ENCODE measurements at regions of chr20 and their contacts with region 1.

Region 1: DNA sequence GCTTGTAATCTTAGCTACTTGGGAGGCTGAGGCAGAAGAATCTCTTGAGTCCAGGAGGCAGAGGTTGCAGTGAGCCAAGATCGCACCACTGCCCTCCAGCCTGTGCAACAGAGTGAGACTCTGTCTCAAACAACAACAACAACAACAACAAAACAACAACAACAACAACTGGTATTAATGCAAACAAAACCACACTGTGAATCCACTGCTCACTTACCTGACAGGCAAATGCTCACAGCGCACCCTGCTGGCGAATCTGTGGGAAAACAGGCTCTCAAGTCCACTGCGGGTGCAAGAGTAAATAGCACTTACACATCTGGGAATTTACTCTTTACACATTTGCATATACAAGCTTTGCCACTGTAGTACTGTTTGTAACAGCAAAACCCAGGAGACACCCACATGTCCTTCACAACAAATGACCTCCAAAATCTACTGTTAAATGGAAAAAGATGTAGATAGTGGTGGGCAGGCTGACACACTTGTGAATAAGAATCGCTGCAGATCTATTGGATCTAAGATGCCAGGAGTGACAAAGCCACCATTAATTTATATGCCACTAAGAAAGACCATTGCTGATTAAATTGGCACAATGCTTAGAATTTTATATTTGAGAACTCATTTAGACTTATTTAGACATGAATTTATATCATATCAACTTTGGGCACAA is 29.3 kb downstream of the NSFL1C start:
- DNase-seq: peak; percentile 38
- H3K4me3 ChIP-seq: no peak overlapping the region
- CTCF ChIP-seq: peak; percentile 84

Region 2: DNA sequence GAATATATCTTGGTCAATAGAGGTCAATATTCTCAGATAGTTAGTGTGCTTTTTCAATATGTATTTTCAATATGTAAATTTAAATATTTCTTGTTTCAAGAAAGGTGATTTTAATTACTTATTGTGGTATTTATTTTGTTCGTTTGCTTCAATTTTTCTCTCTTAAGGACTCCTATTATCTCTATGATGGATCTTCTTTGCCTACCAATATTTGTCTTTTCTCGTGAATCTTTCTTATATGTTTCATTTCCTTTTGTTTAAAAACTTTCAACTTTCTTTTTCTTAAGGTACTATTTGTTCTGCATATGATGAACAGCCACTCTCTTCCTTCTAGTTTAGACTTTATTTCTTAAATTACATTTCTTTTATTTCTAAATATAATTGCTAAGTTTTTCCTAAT is 365.1 kb before region 1 on chr20:
- CTCF ChIA-PET with region 1: no interaction called
- POLR2A ChIA-PET with region 1: no interaction called
- DNase-seq: no peak
- H3K4me3 ChIP-seq: no peak overlapping the region
- CTCF ChIP-seq: no peak

Region 3: GRCh38 chr20:1313236-1313964 is 124.0 kb before region 1 on chr20:
- CTCF ChIA-PET with region 1: interaction called, 119 read pairs
- POLR2A ChIA-PET with region 1: no interaction called
- DNase-seq: no peak
- H3K4me3 ChIP-seq: peak overlapping the region; percentile 53
- CTCF ChIP-seq: peak; percentile 92

Region 4: GRCh38 chr20:1397710-1398109 is 39.7 kb before region 1 on chr20:
- CTCF ChIA-PET with region 1: interaction called, 11 read pairs
- POLR2A ChIA-PET with region 1: no interaction called
- DNase-seq: no peak
- H3K4me3 ChIP-seq: no peak overlapping the region
- CTCF ChIP-seq: no peak

Region 5: DNA sequence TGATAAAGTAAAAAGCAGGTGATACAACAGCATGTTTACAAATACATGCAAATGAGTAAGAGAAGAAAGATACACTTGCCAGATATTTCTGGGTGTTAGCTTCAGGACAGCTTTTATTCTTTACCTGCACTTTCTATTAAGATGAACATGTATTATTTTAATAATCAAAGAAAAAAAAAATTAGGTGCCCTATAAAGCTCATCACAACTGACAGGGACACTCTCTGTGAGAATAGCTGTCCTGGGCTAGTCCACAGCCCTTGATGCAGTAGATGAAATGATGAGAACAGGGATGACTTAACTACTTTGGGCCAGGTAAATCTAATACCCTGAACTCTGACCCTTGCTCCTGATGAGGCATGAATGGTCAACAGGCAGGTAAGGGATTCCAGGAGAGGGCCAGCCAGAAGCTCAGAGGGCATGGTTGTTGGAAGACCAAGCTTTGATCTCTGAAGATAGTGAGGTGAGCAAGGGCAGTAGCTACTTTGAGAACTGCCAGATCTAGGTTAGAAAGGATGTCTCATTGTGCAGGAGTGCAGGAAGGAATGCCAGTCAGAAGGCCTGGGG is 13.6 kb after region 1 on chr20:
- CTCF ChIA-PET with region 1: interaction called, 178 read pairs
- POLR2A ChIA-PET with region 1: no interaction called
- DNase-seq: no peak
- H3K4me3 ChIP-seq: no peak overlapping the region
- CTCF ChIP-seq: no peak

Region 6: GRCh38 chr20:1466211-1467081 is 29.1 kb after region 1 on chr20 and contains the start of gene NSFL1C:
- CTCF ChIA-PET with region 1: interaction called, 63 read pairs
- POLR2A ChIA-PET with region 1: no interaction called
- DNase-seq: no peak
- H3K4me3 ChIP-seq: peak within 1 kb of the TSS; percentile 90
- CTCF ChIP-seq: peak; percentile 94

Region 7: GRCh38 chr20:1524004-1524403 is 86.6 kb after region 1 on chr20:
- CTCF ChIA-PET with region 1: no interaction called
- POLR2A ChIA-PET with region 1: no interaction called
- DNase-seq: no peak
- H3K4me3 ChIP-seq: no peak overlapping the region
- CTCF ChIP-seq: no peak

Region 8: GRCh38 chr20:1595333-1595732 is 158.0 kb after region 1 on chr20:
- CTCF ChIA-PET with region 1: no interaction called
- POLR2A ChIA-PET with region 1: no interaction called
- DNase-seq: no peak
- H3K4me3 ChIP-seq: no peak overlapping the region
- CTCF ChIP-seq: no peak

Measured in AG04449 (cell line).